ENCODE measurements at regions of chr2 and their contacts with region 1.

Region 1: DNA sequence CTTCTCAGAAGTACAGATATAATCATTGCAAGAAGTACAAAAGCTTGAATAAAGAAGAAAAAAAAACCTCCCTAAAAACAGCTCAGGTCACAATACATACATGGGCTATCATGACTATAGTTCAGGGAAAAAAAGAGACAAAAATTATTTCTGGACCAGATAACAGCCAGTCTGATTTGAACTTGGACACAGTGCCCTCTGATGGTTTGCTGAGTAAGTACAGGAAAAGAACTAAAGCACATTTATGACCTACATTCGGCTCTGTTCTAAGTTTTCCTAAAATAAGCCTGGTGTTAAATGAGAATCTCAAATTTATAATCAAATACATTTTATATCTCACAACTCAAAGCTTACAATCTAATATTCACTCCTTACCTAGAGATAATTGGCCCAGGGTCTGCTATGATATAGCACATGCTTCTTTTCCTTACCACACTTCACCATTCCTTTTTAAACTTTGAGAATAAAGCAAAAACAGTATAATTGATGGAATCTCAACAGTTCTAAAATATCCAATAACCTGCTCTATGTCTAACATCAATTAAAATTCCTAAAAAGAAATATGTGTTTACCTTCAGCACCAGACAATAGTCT is 81.1 kb downstream of the RAPH1 start:
- DNase-seq: peak; percentile 72
- ATAC-seq: peak; percentile 78
- H3K4me3 ChIP-seq: no peak overlapping the region
- H3K27ac ChIP-seq: no peak overlapping the region
- H3K4me1 ChIP-seq: peaks cover 11% of the 10 kb centered on the region
- H3K27me3 ChIP-seq: no peaks in the 10 kb centered on the region
- CTCF ChIP-seq: peak; percentile 76
- POLR2A ChIP-seq: no peak
- RAD21 ChIP-seq: peak; percentile 78

Region 2: DNA sequence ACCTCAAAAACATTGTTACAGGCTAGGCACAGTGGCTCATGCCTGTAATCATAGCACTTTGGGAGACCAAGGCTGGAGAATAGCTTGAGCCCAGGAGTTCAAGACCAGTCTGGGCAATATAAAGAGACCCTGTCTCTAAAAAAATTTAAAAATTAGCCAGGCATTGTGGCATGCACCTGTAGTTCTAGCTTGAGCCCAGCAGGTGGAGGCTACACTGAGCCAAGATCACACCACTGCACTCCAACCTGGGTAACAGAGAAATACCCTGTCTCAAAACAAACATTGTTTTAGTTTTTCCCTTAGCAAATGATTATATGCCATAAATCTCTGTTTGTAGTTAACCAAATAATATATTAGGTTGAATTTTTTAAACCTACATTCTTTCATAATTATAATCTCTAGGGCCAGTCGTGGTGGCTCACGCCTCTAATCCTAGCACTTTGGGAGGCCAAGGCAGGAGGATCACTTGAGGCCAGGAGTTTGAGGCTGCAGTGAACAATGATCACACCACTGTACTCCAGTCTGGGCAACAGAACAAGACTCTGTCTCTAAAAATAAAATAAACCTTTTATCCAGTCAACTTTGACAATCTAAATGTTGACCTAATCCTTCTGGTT is 228.4 kb before region 1 on chr2:
- CTCF ChIA-PET with region 1: no interaction called
- POLR2A ChIA-PET with region 1: no interaction called
- dilution Hi-C with region 1: no loop called
- in situ Hi-C with region 1: no loop called
- intact Hi-C with region 1: loop called (anchors 1 kb)
- DNase-seq: peak; percentile 21
- ATAC-seq: peak; percentile 71; the same call in 1 of the 2 replicates
- H3K4me3 ChIP-seq: no peak overlapping the region
- H3K27ac ChIP-seq: no peak overlapping the region
- H3K4me1 ChIP-seq: no peaks in the 10 kb centered on the region
- H3K27me3 ChIP-seq: no peaks in the 10 kb centered on the region
- CTCF ChIP-seq: peak; percentile 50
- POLR2A ChIP-seq: no peak
- RAD21 ChIP-seq: peak; percentile 56

Region 3: DNA sequence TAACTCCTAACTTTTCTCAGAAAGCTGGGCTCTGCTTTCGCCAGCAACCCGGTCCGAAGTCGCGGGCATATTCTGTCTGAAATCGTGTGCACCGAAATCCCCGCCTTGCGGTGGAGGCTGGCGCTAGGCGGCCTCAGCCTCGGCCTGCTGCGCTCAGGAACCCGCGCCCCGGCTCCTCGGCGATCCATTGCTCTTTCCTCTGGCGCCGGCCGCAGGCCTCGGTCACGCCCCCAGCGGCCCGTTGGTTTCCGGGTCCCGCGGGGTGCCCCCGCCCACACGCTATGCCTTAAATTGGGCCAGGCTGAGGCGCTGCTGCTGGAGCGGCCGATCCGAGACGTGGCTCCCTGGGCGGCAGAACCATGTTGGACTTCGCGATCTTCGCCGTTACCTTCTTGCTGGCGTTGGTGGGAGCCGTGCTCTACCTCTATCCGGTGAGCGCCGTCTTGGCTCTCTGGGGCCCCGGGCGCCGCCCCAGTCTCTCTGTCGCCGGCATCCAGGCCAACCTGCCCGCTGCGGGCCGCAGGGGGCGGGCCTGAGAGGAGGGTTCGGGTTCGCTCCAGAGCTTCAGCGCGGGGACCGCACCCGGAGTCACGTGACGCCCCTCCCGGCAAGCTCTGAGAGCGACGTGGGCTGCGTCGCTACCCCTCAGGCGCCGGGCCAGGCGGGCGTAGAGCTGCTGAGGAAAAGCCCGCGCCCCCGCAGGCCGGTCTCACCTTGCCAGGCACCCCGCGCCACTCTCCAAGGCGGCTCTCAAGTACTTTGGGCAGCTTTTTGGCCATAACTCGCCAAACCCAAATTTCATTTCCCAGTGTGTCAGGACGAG is 215.0 kb before region 1 on chr2 and contains the start of gene CYP20A1:
- CTCF ChIA-PET with region 1: interaction called, 4 read pairs
- POLR2A ChIA-PET with region 1: no interaction called
- dilution Hi-C with region 1: no loop called
- in situ Hi-C with region 1: no loop called
- intact Hi-C with region 1: loop called (anchors 5 kb)
- DNase-seq: peak; percentile 94
- ATAC-seq: peak; percentile 97
- H3K4me3 ChIP-seq: peak within 1 kb of the TSS; percentile 64
- H3K27ac ChIP-seq: peak within 1 kb of the TSS; percentile 91
- H3K4me1 ChIP-seq: peaks cover 3% of the 10 kb centered on the region; the same call in 1 of the 2 replicates
- H3K27me3 ChIP-seq: no peaks in the 10 kb centered on the region
- CTCF ChIP-seq: peak; percentile 43
- POLR2A ChIP-seq: peak; percentile 96
- RAD21 ChIP-seq: peak; percentile 35
- total RNA-seq, gene CYP20A1: 16.8 and 26.9 TPM in 2 replicates

Region 4: GRCh38 chr2:203327901-203328759 is 125.8 kb before region 1 on chr2 and contains the start of gene ABI2:
- CTCF ChIA-PET with region 1: no interaction called
- POLR2A ChIA-PET with region 1: no interaction called
- dilution Hi-C with region 1: no loop called
- in situ Hi-C with region 1: no loop called
- intact Hi-C with region 1: loop called (anchors 5 kb)
- DNase-seq: peak; percentile 69
- ATAC-seq: peak; percentile 89
- H3K4me3 ChIP-seq: peak within 1 kb of the TSS; percentile 92
- H3K27ac ChIP-seq: peak within 1 kb of the TSS; percentile 97
- H3K4me1 ChIP-seq: peaks cover 1% of the 10 kb centered on the region; the same call in 1 of the 2 replicates
- H3K27me3 ChIP-seq: no peaks in the 10 kb centered on the region
- CTCF ChIP-seq: no peak
- POLR2A ChIP-seq: peak; percentile 17; the same call in 1 of the 2 replicates
- RAD21 ChIP-seq: no peak
- total RNA-seq, gene ABI2: 35.0 and 35.7 TPM in 2 replicates

Region 5: DNA sequence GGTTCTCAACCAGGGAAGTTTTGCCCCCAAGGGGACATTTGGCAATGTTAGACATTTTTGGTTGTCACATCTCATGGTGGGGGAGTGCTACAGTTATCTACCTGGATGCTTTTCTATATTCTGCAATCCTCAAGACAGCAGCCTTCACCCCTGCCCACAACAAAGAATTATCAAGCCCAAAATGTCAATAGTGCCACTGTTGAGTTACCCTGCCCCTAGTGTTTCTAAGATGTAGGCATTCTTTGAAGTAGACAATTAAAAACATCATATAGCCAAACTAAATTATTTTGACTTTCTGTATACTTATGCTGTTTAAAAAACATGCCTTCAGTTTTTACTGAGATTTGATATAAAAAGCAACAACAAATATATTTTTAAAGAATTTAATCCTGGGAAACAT is 77.8 kb before region 1 on chr2:
- CTCF ChIA-PET with region 1: no interaction called
- POLR2A ChIA-PET with region 1: no interaction called
- dilution Hi-C with region 1: no loop called
- in situ Hi-C with region 1: no loop called
- intact Hi-C with region 1: no loop called
- DNase-seq: no peak
- ATAC-seq: no peak
- H3K4me3 ChIP-seq: no peak overlapping the region
- H3K27ac ChIP-seq: no peak overlapping the region
- H3K4me1 ChIP-seq: no peaks in the 10 kb centered on the region
- H3K27me3 ChIP-seq: no peaks in the 10 kb centered on the region
- CTCF ChIP-seq: no peak
- POLR2A ChIP-seq: no peak
- RAD21 ChIP-seq: no peak